ENCODE measurements at regions of chr7 and their contacts with region 1.

Region 1: DNA sequence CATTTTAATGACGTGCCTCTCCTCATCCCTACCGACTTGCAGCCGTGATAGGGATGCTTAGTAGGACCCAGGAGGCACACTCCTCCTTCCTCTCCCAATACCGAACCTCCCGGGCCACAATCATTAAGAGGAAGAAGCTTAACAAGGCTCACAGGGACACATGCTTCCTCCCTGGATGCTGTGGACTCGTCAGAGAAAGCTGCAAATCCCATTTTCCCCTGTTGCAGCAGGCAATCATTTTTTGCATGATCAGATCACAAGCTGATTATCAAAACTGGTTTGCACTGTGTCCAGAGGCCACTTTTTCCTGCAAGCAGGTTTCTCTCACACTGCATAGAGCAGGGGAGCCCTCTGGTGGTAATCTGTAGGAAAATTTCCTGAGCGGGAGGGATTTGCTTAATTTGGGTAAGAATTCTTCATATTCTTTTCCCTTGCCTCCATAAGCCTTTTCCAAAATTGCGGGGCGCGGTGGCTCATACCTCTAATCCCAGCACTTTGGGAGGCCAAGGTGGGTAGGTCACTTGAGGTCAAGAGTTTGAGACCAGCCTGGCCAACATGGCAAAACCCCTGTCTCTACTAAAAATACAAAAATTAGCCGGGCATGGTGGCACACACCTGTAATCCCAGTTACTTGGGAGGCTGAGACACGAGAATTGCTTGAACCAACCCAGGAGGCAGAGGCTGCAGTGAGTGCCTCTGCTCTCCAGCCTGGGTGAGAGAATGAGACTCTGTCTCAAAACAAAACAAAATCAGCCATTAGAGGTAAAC is 16.1 kb upstream of the LAMB4 start:
- DNase-seq: peak; percentile 69
- ATAC-seq: peak; percentile 55
- H3K4me3 Mint-ChIP-seq: no peak overlapping the region
- H3K27ac Mint-ChIP-seq: no peak overlapping the region
- H3K4me1 Mint-ChIP-seq: no peaks in the 10 kb centered on the region
- H3K27me3 Mint-ChIP-seq: peaks cover 3% of the 10 kb centered on the region

Region 2: GRCh38 chr7:108002726-108003598 is 143.3 kb before region 1 on chr7 and contains the start of gene LAMB1:
- CTCF ChIA-PET with region 1: no interaction called
- POLR2A ChIA-PET with region 1: no interaction called
- intact Hi-C with region 1: loop called in 1 of 2 experiments (anchors 10 kb)
- DNase-seq: peak; percentile 45
- ATAC-seq: peak; percentile 23
- H3K4me3 Mint-ChIP-seq: peak within 1 kb of the TSS; percentile 67
- H3K27ac Mint-ChIP-seq: no peak within 1 kb of the TSS
- H3K4me1 Mint-ChIP-seq: peaks cover 14% of the 10 kb centered on the region
- H3K27me3 Mint-ChIP-seq: peaks cover 58% of the 10 kb centered on the region
- total RNA-seq, gene LAMB1: 0.16 TPM in 1 of 2 experiments, not detected in the other

Region 3: DNA sequence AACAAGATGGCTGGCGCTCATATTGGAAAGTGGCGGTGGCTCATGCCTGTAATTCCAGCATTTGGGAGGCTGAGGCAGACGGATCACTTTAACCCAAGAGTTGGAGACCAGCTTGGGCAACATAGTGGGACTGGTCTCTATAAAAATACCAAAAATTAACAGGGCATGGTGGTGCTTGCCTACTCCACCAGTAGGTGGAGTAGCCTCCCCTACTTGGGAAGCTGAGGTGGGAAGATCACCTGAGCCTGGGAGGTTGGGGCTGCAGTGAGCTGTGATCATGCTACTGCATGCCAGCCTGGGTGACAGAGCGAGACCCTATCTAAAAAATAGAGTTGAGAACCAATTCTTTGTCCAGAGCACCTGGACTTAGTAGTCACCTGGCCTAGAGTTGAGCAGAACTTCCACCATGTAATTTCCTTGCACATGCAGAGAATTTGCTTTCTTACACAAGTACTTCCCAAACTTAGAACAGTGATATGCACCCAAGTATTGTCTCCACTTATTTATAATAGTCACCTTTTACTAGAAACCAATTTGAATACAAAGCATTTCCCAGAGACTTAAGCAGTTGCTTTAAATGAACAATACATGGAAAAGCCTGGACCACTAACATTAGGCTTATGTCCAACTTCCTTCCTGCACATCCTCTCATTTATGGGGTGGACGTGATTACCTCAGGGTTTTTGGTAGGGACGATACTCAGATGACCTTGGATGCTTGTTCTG is 32.0 kb before region 1 on chr7:
- CTCF ChIA-PET with region 1: interaction called, 40 read pairs
- POLR2A ChIA-PET with region 1: interaction called, 3 read pairs
- intact Hi-C with region 1: loop called (anchors 1 kb)
- DNase-seq: peak; percentile 49
- ATAC-seq: peak; percentile 87
- H3K4me3 Mint-ChIP-seq: no peak overlapping the region
- H3K27ac Mint-ChIP-seq: no peak overlapping the region
- H3K4me1 Mint-ChIP-seq: no peaks in the 10 kb centered on the region
- H3K27me3 Mint-ChIP-seq: peaks cover 4% of the 10 kb centered on the region

Region 4: GRCh38 chr7:108135446-108136190 is 10.6 kb before region 1 on chr7:
- CTCF ChIA-PET with region 1: interaction called, 10 read pairs
- POLR2A ChIA-PET with region 1: no interaction called
- intact Hi-C with region 1: no loop called
- DNase-seq: peak; percentile 69
- ATAC-seq: peak; percentile 88
- H3K4me3 Mint-ChIP-seq: peak overlapping the region; percentile 15
- H3K27ac Mint-ChIP-seq: peak overlapping the region; percentile 79
- H3K4me1 Mint-ChIP-seq: peaks cover 19% of the 10 kb centered on the region
- H3K27me3 Mint-ChIP-seq: peaks cover 5% of the 10 kb centered on the region

Region 5: GRCh38 chr7:108253275-108254044 is 107.2 kb after region 1 on chr7:
- CTCF ChIA-PET with region 1: no interaction called
- POLR2A ChIA-PET with region 1: no interaction called
- intact Hi-C with region 1: no loop called
- DNase-seq: no peak
- ATAC-seq: no peak
- H3K4me3 Mint-ChIP-seq: no peak overlapping the region
- H3K27ac Mint-ChIP-seq: no peak overlapping the region
- H3K4me1 Mint-ChIP-seq: no peaks in the 10 kb centered on the region
- H3K27me3 Mint-ChIP-seq: peaks cover 2% of the 10 kb centered on the region